Heart left ventricle (tissue), 16 donors: ENCODE measurements at regions of chr19 and their contacts with region 1.

Region 1: GRCh38 chr19:14689598-14690503 is at the start of gene ZNF333:
- DNase-seq: peak; percentile 96 to 99 (median 97)
- ATAC-seq: peak; percentile 98 to 100 (median 99)
- H3K4me3 ChIP-seq: peak within 1 kb of the TSS; percentile 61 to 100 (median 86)
- H3K27ac ChIP-seq: peak within 1 kb of the TSS; percentile 85 to 100 (median 94)
- H3K4me1 ChIP-seq: peaks cover 0 to 25% (median 12%) of the 10 kb centered on the region in 12 donors
- H3K27me3 ChIP-seq: no peaks in the 10 kb centered on the region
- CTCF ChIP-seq: no peak
- POLR2A ChIP-seq: peak in 1 of 2 donors; percentile 60
- total RNA-seq, gene ZNF333: 6.7 to 12.1 (median 8.6) TPM

Region 2: DNA sequence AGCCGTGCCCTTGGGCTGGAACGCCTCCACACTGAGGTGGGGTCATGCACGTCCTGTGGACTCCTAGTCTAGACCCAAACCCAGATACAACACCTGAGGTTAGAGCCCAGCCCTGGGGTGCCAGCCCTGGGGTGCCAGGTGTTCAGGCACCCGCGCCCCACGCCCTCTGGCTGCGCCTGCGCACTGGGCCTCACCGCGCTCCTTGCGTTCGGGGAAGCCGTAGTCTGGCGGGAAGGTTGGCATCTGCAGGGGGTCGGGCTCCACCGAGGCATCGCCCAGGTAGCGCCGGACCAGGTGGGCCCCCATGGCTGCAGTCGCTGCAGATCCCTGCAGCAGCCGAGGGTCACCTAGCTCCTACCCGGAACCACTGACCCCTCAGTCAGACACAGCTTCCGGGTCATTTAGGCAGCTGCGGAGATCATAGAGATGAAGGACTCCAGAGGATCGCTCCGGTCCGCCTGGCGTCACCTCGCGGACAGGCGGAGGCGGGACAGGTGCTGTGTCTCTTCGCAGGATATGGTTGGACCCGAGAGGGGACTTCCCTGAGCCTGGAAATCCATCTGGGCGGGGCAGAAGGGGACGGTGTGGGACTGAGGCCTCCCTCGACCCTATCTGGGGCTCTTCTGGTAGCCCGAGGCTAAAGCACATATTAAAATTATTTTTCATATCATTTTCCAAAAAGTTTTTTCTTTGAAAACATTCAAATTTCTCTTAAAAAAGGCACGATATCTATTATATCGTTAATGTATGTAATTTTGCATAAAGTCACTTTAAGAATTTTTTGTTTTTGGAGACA is 118.0 kb before region 1 on chr19 and contains the start of gene NDUFB7:
- intact Hi-C with region 1: loop called (anchors 2 to 5 kb)
- DNase-seq: peak; percentile 91 to 95 (median 94)
- ATAC-seq: peak; percentile 95 to 98 (median 98)
- H3K4me3 ChIP-seq: peak within 1 kb of the TSS; percentile 66 to 99 (median 93)
- H3K27ac ChIP-seq: peak within 1 kb of the TSS; percentile 76 to 95 (median 87)
- H3K4me1 ChIP-seq: peaks cover 4 to 50% (median 27%) of the 10 kb centered on the region in 12 donors
- H3K27me3 ChIP-seq: no peaks in the 10 kb centered on the region
- CTCF ChIP-seq: peak; percentile 54 to 95 (median 78)
- POLR2A ChIP-seq: peak in 1 of 2 donors; percentile 58
- total RNA-seq, gene NDUFB7: 290 to 1,084 (median 402) TPM

Region 3: DNA sequence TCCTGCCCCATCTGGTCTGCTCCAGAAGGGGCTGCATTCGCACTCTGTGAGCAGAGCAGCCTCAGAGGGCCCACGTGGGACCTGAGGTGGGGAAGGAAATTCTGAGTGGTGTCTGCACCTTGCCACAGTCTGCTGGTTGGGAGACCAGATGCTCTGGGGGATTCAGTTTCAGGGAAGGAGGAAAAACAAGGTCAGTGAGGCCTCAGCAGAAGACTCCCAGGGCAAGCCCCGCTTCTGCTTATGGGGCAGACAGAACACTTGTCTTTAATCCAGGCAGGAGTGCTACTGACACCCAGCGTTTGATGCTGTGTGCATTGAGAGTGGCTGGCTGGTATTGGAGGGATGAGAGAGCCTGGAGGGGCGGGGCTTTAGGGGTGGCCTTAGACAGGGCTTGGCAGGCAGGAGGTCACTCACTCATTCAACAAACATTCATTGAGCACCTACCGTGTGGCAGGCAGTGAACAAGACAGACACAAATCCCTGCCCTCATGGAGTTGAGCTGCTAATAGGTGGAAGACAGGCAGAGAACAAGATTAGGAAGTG is 111.9 kb before region 1 on chr19:
- intact Hi-C with region 1: loop called (anchors 2 to 5 kb)
- DNase-seq: no peak
- ATAC-seq: no peak
- H3K4me3 ChIP-seq: no peak overlapping the region
- H3K27ac ChIP-seq: no peak overlapping the region
- H3K4me1 ChIP-seq: peaks cover 0 to 8% (median 4%) of the 10 kb centered on the region in 12 donors
- H3K27me3 ChIP-seq: no peaks in the 10 kb centered on the region
- CTCF ChIP-seq: no peak
- POLR2A ChIP-seq: no peak